ENCODE measurements at regions of chr2 and their contacts with region 1.

Region 1: GRCh38 chr2:179049546-179050311 is at the start of gene CCDC141:
- DNase-seq: peak; percentile 44
- ATAC-seq: peak; percentile 75
- H3K4me3 Mint-ChIP-seq: peak within 1 kb of the TSS; percentile 88
- H3K27ac Mint-ChIP-seq: peak within 1 kb of the TSS; percentile 94
- H3K4me1 Mint-ChIP-seq: peaks cover 33% of the 10 kb centered on the region
- H3K27me3 Mint-ChIP-seq: no peaks in the 10 kb centered on the region
- total RNA-seq, gene CCDC141: 11.8 to 15.0 TPM

Region 2: GRCh38 chr2:179031731-179032408 is 17.9 kb before region 1 on chr2:
- POLR2A ChIA-PET with region 1: interaction called, 22 read pairs
- DNase-seq: no peak
- ATAC-seq: peak; percentile 95
- H3K4me3 Mint-ChIP-seq: peak overlapping the region; percentile 80
- H3K27ac Mint-ChIP-seq: peak overlapping the region; percentile 95
- H3K4me1 Mint-ChIP-seq: peaks cover 23% of the 10 kb centered on the region
- H3K27me3 Mint-ChIP-seq: no peaks in the 10 kb centered on the region